Mammary epithelial cell (primary cell): ENCODE measurements at regions of chr20 and their contacts with region 1.

Region 1: GRCh38 chr20:36411861-36412454 is 105.8 kb downstream of the DLGAP4 start:
- DNase-seq: no peak
- H3K4me3 ChIP-seq: no peak overlapping the region
- H3K27ac ChIP-seq: no peak overlapping the region
- H3K4me1 ChIP-seq: peaks cover 18% of the 10 kb centered on the region
- H3K27me3 ChIP-seq: no peaks in the 10 kb centered on the region
- CTCF ChIP-seq: no peak

Region 2: DNA sequence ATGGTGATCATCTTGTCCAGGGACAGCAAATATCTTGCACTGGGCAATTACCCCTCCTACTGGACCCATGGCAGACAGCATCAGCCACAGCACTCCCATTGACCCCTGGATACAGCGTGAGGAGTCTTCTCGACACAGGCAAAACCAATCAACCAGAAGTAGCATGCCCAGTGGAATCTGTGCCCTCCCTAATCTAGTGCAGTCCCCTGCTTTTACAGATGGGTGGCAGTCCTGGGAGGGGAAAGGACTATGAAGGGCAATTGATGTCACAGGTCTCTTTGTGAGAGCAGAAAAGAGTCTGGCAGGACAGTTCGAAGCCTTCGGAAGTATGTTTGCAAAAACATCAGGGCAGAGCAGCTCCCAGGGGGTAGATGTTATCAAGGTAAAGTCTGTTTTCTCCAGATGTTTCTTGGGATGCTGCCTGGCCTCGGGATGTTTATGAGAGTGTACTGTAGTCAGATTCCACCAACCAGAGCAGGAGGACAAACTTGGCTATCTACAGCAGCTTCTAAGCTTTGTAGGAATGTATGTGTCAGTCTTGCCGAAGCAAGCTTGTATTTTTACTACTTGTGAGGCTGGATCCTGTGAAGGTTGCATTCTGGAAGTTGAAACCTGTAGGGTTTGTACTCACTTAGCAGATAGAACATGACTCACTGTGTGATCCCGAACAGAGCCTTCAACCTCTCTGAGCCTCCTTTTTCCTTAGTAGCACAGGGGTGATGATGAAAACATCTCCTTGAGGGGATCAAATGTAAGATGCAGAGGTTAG is 66.4 kb after region 1 on chr20:
- CTCF ChIA-PET with region 1: no interaction called
- dilution Hi-C with region 1: loop called (anchors 5 kb)
- in situ Hi-C with region 1: no loop called
- intact Hi-C with region 1: no loop called
- DNase-seq: no peak
- H3K4me3 ChIP-seq: no peak overlapping the region
- H3K27ac ChIP-seq: no peak overlapping the region
- H3K4me1 ChIP-seq: peaks cover 17% of the 10 kb centered on the region
- H3K27me3 ChIP-seq: no peaks in the 10 kb centered on the region
- CTCF ChIP-seq: no peak